HAP-1 (cell line): ENCODE measurements at regions of chr6 and their contacts with region 1.

Region 1: DNA sequence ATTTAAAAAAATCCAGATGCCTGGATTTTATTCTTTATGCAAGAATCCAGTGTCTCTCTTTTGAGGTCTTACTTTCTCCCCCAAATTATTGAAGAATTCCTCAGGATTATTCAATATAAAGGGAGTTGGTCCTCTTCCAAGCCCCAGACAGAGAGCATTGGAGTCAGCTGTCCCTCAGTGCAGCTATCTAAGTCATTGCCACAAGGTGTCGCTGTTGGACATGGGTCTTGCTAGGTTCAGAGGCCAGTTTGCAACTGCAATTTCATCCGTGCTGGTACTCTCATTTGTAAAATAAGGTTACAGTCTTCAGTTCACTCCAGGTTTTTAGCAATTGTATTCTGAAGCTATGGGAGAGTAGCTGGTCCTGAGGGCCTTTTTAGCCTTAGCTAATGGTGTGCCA is 27.8 kb downstream of the CCN2 start:
- DNase-seq: peak; percentile 55 to 80
- H3K4me3 ChIP-seq: no peak overlapping the region
- H3K4me1 ChIP-seq: no peaks in the 10 kb centered on the region
- H3K27me3 ChIP-seq: no peaks in the 10 kb centered on the region

Region 2: GRCh38 chr6:132483779-132484679 is 560.7 kb after region 1 on chr6:
- in situ Hi-C with region 1: loop called (anchors 5 kb)
- DNase-seq: peak; percentile 28 to 63
- H3K4me3 ChIP-seq: no peak overlapping the region
- H3K4me1 ChIP-seq: no peaks in the 10 kb centered on the region
- H3K27me3 ChIP-seq: no peaks in the 10 kb centered on the region

Region 3: GRCh38 chr6:132813173-132813856 is 890.0 kb after region 1 on chr6:
- in situ Hi-C with region 1: no loop called
- DNase-seq: peak in 1 of 2 experiments; percentile 56
- H3K4me3 ChIP-seq: peak overlapping the region; percentile 90
- H3K4me1 ChIP-seq: peaks cover 34% of the 10 kb centered on the region
- H3K27me3 ChIP-seq: no peaks in the 10 kb centered on the region